ENCODE measurements at regions of chr1 and their contacts with region 1.

Region 1: GRCh38 chr1:147599362-147600118 is 58.2 kb downstream of the BCL9 start:
- DNase-seq: peak; percentile 99
- ATAC-seq: peak; percentile 96 to 97
- H3K4me3 ChIP-seq: peak overlapping the region; percentile 99
- H3K27ac ChIP-seq: peak overlapping the region; percentile 56
- H3K4me1 ChIP-seq: peaks cover 3% of the 10 kb centered on the region
- H3K27me3 ChIP-seq: no peaks in the 10 kb centered on the region

Region 2: GRCh38 chr1:147545133-147545532 is 54.4 kb before region 1 on chr1:
- intact Hi-C with region 1: loop called (anchors 5 kb)
- DNase-seq: peak in 1 of 3 donors; percentile 54
- ATAC-seq: no peak
- H3K4me3 ChIP-seq: no peak overlapping the region
- H3K27ac ChIP-seq: no peak overlapping the region
- H3K4me1 ChIP-seq: peaks cover 2% of the 10 kb centered on the region
- H3K27me3 ChIP-seq: no peaks in the 10 kb centered on the region

Region 3: GRCh38 chr1:147551036-147551435 is 48.5 kb before region 1 on chr1:
- intact Hi-C with region 1: loop called in 2 of 4 experiments (anchors 5 kb)
- DNase-seq: no peak
- ATAC-seq: peak in 1 of 2 donors; percentile 61
- H3K4me3 ChIP-seq: no peak overlapping the region
- H3K27ac ChIP-seq: no peak overlapping the region
- H3K4me1 ChIP-seq: peaks cover 4% of the 10 kb centered on the region
- H3K27me3 ChIP-seq: no peaks in the 10 kb centered on the region

Measured in right cardiac atrium (tissue), 5 donors.